Activated naive CD4-positive, alpha-beta T cell treated with anti-CD3 and anti-CD28 coated beads for 36 hours (primary cell): ENCODE measurements at regions of chr15 and their contacts with region 1.

Region 1: GRCh38 chr15:50908210-50909009 is at the start of gene AP4E1:
- DNase-seq: peak; percentile 94
- H3K4me3 Mint-ChIP-seq: peak within 1 kb of the TSS; percentile 92
- H3K27ac Mint-ChIP-seq: peak within 1 kb of the TSS; percentile 99
- H3K4me1 Mint-ChIP-seq: peaks cover 25% of the 10 kb centered on the region
- H3K27me3 Mint-ChIP-seq: no peaks in the 10 kb centered on the region
- total RNA-seq, gene AP4E1: 6.8 to 9.4 TPM

Region 2: GRCh38 chr15:50182219-50183013 is 726.0 kb before region 1 on chr15:
- CTCF ChIA-PET with region 1: interaction called, 4 read pairs
- intact Hi-C with region 1: loop called (anchors 1 kb)
- DNase-seq: peak; percentile 73
- H3K4me3 Mint-ChIP-seq: peak overlapping the region; percentile 98
- H3K27ac Mint-ChIP-seq: peak overlapping the region; percentile 87
- H3K4me1 Mint-ChIP-seq: peaks cover 29% of the 10 kb centered on the region
- H3K27me3 Mint-ChIP-seq: peaks cover 25% of the 10 kb centered on the region

Region 3: GRCh38 chr15:50315814-50316630 is 592.4 kb before region 1 on chr15:
- CTCF ChIA-PET with region 1: interaction called, 3 read pairs
- intact Hi-C with region 1: loop called (anchors 5 kb)
- DNase-seq: no peak
- H3K4me3 Mint-ChIP-seq: no peak overlapping the region
- H3K27ac Mint-ChIP-seq: no peak overlapping the region
- H3K4me1 Mint-ChIP-seq: peaks cover 25% of the 10 kb centered on the region
- H3K27me3 Mint-ChIP-seq: no peaks in the 10 kb centered on the region

Region 4: DNA sequence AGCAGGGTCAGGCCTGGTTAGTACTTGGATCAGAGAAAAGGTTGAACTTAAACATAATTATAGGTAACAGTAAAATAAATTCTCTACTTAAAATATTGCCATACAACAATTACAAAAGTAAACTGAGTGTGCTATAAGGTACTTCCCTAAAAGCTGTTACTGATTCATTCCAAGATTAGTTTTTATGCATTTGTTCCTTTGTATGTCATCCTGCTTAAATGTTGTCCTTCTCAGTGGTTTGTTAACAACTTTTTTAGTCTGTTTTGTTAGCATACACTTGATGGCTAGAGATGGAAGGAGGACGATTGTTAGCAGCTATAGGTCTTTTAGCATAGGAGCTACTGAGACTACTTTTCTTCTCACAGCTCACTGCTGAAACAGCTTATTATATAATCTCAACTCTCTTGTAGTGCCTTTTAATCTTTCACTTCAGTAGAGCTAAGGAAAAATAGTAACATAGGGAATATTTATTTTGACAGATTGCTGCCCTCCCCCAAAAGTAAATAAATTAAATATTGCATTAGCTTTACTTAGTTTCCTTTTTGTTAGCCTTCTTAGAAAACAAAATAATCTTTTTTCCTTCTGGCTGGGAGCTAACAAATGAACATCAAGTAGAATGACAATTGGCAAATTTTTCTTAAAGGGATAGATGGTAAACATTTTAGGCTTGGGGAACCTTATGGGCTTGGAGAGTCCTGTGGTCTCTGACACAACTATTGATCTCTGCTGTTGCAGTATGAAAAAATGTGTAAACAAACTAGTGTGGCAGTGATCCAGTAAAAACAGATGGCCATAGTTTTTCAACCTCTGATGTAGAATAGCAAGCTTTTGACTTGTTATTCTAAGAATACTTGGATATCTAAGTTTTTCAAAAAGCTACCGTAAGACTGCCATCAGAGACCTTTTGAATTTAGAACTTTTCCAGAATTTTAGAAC is 444.7 kb before region 1 on chr15:
- CTCF ChIA-PET with region 1: no interaction called
- intact Hi-C with region 1: loop called (anchors 10 kb)
- DNase-seq: no peak
- H3K4me3 Mint-ChIP-seq: no peak overlapping the region
- H3K27ac Mint-ChIP-seq: no peak overlapping the region
- H3K4me1 Mint-ChIP-seq: peaks cover 15% of the 10 kb centered on the region
- H3K27me3 Mint-ChIP-seq: no peaks in the 10 kb centered on the region

Region 5: DNA sequence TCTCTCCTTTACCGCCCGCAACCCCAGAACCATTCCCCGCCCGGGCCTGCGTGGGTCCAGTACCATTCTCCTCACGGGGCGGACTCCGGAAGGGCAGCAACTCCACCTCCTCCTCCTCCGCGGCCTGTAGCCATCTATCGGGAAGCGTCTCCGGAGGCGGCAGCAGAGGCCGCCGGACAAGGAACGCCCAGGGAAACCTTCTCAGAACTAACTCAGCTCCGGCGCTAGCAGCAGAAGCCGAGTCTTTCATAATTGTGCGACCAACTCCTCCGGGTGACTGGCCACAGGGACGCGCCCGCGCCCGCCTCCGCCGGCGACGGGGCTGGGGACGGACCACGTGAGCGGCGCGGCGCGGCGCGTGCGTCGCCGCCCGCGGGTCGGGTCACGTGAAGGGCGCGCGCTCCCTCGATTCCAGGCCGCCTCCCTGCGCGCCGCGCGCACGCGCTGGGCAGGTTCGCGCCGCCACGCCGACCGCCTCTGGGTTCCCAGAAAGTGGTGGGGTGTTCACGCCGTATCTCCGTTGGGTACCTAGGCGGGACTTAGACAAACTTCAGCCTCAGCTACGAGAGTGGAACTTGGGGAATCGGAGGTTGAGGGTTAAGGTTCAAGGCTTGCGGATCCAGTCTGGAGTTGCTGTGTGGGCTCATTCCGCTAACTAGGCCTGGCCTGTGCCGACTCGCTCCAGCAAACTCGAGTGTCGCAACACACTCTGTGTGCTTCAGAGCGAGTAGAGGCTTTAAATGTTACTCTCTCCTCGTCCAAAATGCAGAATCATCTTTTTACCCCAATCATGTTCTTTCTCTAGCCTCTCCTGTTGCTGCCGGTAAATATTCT is 221.7 kb before region 1 on chr15 and contains the start of gene TRPM7:
- CTCF ChIA-PET with region 1: interaction called, 6 read pairs
- intact Hi-C with region 1: loop called (anchors 1 kb)
- DNase-seq: peak; percentile 87
- H3K4me3 Mint-ChIP-seq: peak within 1 kb of the TSS; percentile 99
- H3K27ac Mint-ChIP-seq: peak within 1 kb of the TSS; percentile 98
- H3K4me1 Mint-ChIP-seq: peaks cover 52% of the 10 kb centered on the region
- H3K27me3 Mint-ChIP-seq: no peaks in the 10 kb centered on the region
- total RNA-seq, gene TRPM7: 31.1 to 32.7 TPM

Region 6: GRCh38 chr15:50753463-50753862 is 154.9 kb before region 1 on chr15:
- CTCF ChIA-PET with region 1: no interaction called
- intact Hi-C with region 1: no loop called
- DNase-seq: no peak
- H3K4me3 Mint-ChIP-seq: no peak overlapping the region
- H3K27ac Mint-ChIP-seq: no peak overlapping the region
- H3K4me1 Mint-ChIP-seq: peaks cover 25% of the 10 kb centered on the region
- H3K27me3 Mint-ChIP-seq: no peaks in the 10 kb centered on the region

Region 7: DNA sequence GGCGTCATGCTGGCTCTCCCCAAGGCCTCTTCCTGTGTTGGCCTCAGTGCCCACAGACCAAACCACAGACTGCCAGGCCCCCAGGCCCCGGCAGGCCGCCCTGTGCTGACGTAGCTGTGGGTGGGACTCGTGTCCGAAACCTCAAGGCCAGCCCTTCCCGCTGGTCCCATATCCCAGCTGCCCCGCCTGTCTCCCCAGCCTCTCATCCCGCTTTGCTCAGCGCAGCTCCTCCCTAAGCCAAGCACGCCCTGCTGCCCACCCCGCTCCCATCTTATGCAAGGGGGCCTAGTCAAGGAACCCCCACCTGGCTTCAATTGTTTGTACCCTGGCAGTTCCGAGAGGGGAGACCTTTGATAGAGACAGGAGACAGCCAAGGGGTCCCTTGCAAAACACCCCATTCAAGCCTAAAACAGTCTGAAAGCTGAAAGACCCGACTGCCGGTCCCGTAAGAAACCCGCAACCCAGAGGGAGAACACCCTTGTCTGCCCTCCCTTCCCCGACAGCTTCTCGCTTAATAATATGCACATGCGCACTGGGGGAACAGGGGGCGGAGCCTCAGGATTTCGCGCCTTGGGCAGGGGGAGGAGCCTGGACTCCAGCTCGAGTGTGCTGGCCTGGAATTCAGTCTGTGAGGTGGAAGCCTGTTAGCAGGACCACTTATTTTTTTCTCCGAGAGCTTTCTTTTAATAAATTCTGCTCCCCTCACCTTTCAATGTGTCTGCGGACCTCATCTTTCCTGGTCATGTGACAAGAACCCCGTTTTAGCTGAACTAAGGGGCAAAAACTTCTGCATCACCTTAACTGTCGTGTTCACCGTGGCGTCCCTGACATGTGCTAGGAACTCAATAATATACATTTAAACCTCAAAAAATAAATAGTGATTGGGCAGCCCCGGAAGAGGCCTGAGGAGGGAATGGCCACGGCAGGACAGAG is 169.1 kb after region 1 on chr15:
- CTCF ChIA-PET with region 1: no interaction called
- intact Hi-C with region 1: loop called (anchors 2 kb)
- DNase-seq: peak; percentile 91
- H3K4me3 Mint-ChIP-seq: peak overlapping the region; percentile 68
- H3K27ac Mint-ChIP-seq: peak overlapping the region; percentile 85
- H3K4me1 Mint-ChIP-seq: peaks cover 24% of the 10 kb centered on the region
- H3K27me3 Mint-ChIP-seq: peaks cover 8% of the 10 kb centered on the region